CD4-positive, alpha-beta memory T cell (primary cell): ENCODE measurements at regions of chr1 and their contacts with region 1.

Region 1: GRCh38 chr1:67735806-67736627 is 51.0 kb downstream of the GADD45A start:
- DNase-seq: peak in 4 of 5 donors; percentile 14 to 30 (median 20)
- H3K4me3 ChIP-seq: peak overlapping the region in 1 of 2 donors; percentile 54
- H3K4me3 Mint-ChIP-seq: peak overlapping the region; percentile 56 to 90 (median 83)
- H3K27ac ChIP-seq: no peak overlapping the region
- H3K27ac Mint-ChIP-seq: peak overlapping the region; percentile 44 to 92 (median 74)
- H3K4me1 ChIP-seq: peaks cover 18% of the 10 kb centered on the region
- H3K4me1 Mint-ChIP-seq: peaks cover 11 to 13% (median 13%) of the 10 kb centered on the region in 4 donors
- H3K27me3 ChIP-seq: no peaks in the 10 kb centered on the region
- H3K27me3 Mint-ChIP-seq: no peaks in the 10 kb centered on the region

Region 2: GRCh38 chr1:65820983-65821382 is 1915.0 kb before region 1 on chr1:
- CTCF ChIA-PET with region 1: no interaction called
- POLR2A ChIA-PET with region 1: no interaction called
- intact Hi-C with region 1: no loop called
- DNase-seq: no peak
- H3K4me3 ChIP-seq: no peak overlapping the region
- H3K4me3 Mint-ChIP-seq: no peak overlapping the region
- H3K27ac ChIP-seq: no peak overlapping the region
- H3K27ac Mint-ChIP-seq: no peak overlapping the region
- H3K4me1 ChIP-seq: no peaks in the 10 kb centered on the region
- H3K4me1 Mint-ChIP-seq: no peaks in the 10 kb centered on the region
- H3K27me3 ChIP-seq: peaks cover 3% of the 10 kb centered on the region
- H3K27me3 Mint-ChIP-seq: peaks cover 0 to 9% of the 10 kb centered on the region in 2 donors

Region 3: GRCh38 chr1:67618285-67619018 is 117.6 kb before region 1 on chr1:
- CTCF ChIA-PET with region 1: no interaction called
- POLR2A ChIA-PET with region 1: no interaction called
- intact Hi-C with region 1: no loop called
- DNase-seq: no peak
- H3K4me3 ChIP-seq: no peak overlapping the region
- H3K4me3 Mint-ChIP-seq: no peak overlapping the region
- H3K27ac ChIP-seq: no peak overlapping the region
- H3K27ac Mint-ChIP-seq: no peak overlapping the region
- H3K4me1 ChIP-seq: no peaks in the 10 kb centered on the region
- H3K4me1 Mint-ChIP-seq: no peaks in the 10 kb centered on the region
- H3K27me3 ChIP-seq: no peaks in the 10 kb centered on the region
- H3K27me3 Mint-ChIP-seq: peaks cover 19 to 27% of the 10 kb centered on the region in 2 donors

Region 4: GRCh38 chr1:67747667-67748546 is 11.9 kb after region 1 on chr1:
- CTCF ChIA-PET with region 1: interaction called, 10 read pairs
- POLR2A ChIA-PET with region 1: interaction called, 3 read pairs
- intact Hi-C with region 1: no loop called
- DNase-seq: no peak
- H3K4me3 ChIP-seq: no peak overlapping the region
- H3K4me3 Mint-ChIP-seq: peak overlapping the region in 1 of 8 donors; percentile 21
- H3K27ac ChIP-seq: no peak overlapping the region
- H3K27ac Mint-ChIP-seq: no peak overlapping the region
- H3K4me1 ChIP-seq: no peaks in the 10 kb centered on the region
- H3K4me1 Mint-ChIP-seq: peaks cover 0 to 8% (median 2%) of the 10 kb centered on the region in 4 donors
- H3K27me3 ChIP-seq: no peaks in the 10 kb centered on the region
- H3K27me3 Mint-ChIP-seq: peaks cover 3 to 14% of the 10 kb centered on the region in 2 donors